Activated CD4-positive, alpha-beta T cell treated with anti-CD3 and anti-CD28 coated beads, Interleukin-2, amount 10 ng/mL, durations not matched to agents 24 days and 14 days (primary cell): ENCODE measurements at regions of chr2 and their contacts with region 1.

Region 1: DNA sequence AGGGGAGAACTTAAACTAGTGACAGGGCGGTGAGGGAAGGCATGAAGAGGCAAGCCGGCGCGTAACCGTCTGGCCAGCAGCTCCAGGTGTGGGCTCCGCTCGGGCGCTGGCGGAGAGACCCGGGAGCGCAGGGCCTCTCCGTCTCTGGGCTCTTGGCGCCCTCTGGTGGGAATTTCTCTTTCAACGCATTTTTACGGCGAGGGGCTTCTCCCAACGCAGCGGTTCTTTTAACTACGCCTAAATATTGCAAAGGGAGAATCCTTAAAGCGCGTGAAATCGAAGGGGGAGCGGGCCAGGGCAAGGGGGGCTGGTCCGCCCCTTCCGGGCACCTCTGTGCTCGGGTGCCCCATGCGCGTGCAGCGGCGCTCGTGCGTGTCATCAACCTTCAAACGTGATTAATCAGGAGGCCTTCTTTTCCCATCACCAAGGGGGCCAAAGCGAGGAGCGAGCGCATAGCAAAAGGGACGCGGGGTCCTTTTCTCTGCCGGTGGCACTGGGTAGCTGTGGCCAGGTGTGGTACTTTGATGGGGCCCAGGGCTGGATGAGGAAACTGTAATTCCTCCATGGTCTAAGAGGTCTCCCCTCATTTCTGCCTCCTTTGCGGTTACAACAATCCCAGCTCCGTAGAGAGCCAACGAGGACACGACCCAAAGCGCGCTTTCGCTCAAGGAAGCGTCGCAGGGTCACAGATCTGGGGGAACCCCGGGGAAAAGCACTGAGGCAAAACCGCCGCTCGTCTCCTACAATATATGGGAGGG is 762 bp upstream of the GAD1 start:
- DNase-seq: peak; percentile 91
- H3K4me3 Mint-ChIP-seq: peak overlapping the region; percentile 83
- H3K27ac Mint-ChIP-seq: peak overlapping the region; percentile 78
- H3K4me1 Mint-ChIP-seq: peaks cover 34% of the 10 kb centered on the region
- H3K27me3 Mint-ChIP-seq: peaks cover 69% of the 10 kb centered on the region

Region 2: DNA sequence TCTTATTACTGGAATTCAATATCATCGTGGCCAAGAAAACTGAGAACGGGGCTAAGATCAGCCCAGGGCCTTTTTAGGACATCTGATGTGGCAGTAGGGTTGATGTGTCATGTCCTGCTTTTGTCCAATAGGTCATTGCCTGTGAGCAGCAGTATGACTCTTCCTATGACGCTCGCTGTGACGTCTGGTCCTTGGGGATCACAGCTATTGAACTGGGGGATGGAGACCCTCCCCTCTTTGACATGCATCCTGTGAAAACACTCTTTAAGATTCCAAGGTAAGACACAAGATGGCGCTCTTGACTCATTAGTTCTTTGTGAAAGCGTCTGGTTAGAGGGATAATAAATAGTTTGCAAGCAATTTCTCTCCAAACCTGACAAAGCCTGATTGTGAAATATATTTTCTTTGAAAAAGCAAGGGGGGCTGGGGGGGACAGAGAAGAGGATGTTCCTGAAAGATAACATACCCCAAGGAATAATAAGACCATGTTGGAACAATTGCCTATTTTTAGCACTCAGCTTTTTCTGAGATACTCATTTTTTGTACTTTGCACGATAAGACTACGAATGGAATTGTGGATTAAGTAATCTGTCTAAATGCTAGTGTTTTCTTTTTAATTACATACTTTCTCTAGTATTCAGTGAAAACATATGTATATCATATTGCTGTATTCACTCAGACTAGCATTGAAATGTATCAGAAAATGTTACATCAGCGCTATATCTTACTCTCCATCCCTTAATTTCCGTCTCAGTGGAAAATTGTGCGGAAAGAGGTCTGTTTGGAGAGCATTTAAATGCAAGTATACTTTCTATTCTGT is 579.9 kb before region 1 on chr2:
- intact Hi-C with region 1: loop called (anchors 1 kb)
- DNase-seq: peak; percentile 76
- H3K4me3 Mint-ChIP-seq: no peak overlapping the region
- H3K27ac Mint-ChIP-seq: no peak overlapping the region
- H3K4me1 Mint-ChIP-seq: no peaks in the 10 kb centered on the region
- H3K27me3 Mint-ChIP-seq: peaks cover 28% of the 10 kb centered on the region

Region 3: GRCh38 chr2:170361090-170361936 is 454.6 kb before region 1 on chr2:
- intact Hi-C with region 1: loop called (anchors 1 kb)
- DNase-seq: peak; percentile 87
- H3K4me3 Mint-ChIP-seq: peak overlapping the region; percentile 40
- H3K27ac Mint-ChIP-seq: peak overlapping the region; percentile 97
- H3K4me1 Mint-ChIP-seq: peaks cover 38% of the 10 kb centered on the region
- H3K27me3 Mint-ChIP-seq: peaks cover 4% of the 10 kb centered on the region

Region 4: GRCh38 chr2:170396799-170397459 is 419.0 kb before region 1 on chr2:
- intact Hi-C with region 1: loop called (anchors 1 kb)
- DNase-seq: no peak
- H3K4me3 Mint-ChIP-seq: no peak overlapping the region
- H3K27ac Mint-ChIP-seq: no peak overlapping the region
- H3K4me1 Mint-ChIP-seq: peaks cover 3% of the 10 kb centered on the region
- H3K27me3 Mint-ChIP-seq: peaks cover 35% of the 10 kb centered on the region

Region 5: GRCh38 chr2:170563401-170563800 is 252.5 kb before region 1 on chr2:
- intact Hi-C with region 1: no loop called
- DNase-seq: no peak
- H3K4me3 Mint-ChIP-seq: no peak overlapping the region
- H3K27ac Mint-ChIP-seq: no peak overlapping the region
- H3K4me1 Mint-ChIP-seq: no peaks in the 10 kb centered on the region
- H3K27me3 Mint-ChIP-seq: peaks cover 22% of the 10 kb centered on the region

Region 6: DNA sequence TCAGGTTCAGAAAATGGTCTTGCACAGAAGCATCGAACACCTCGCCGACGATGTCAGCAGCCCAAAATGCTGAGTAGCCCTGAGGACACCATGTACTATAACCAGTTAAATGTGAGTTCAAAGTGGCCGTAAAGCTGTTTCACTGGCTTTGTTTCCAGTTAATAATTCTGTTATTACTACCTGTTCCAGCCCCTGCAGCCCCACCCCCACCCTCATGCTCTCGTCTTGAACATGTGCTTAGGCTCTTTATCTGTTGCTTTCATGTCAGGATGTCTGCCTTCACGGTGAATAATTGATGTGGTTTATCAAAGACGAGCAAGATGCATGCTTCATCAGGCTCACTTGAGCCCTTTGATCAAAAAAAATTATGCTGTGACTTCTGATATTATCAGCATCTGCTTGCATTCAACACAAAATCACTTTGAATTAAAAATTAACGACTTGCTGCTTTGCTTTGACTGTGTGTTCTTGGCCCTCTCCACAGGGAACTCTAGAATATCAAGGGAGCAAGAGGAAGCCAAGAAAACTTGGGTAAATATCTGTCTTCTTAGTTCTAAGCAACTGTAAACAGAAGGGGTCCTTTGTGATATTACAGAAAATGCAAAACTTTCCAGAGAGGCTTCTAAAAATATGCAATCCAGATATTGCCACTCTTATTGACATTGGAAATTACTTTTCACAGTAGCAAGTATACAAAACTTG is 164.2 kb before region 1 on chr2:
- intact Hi-C with region 1: no loop called
- DNase-seq: peak; percentile 69
- H3K4me3 Mint-ChIP-seq: no peak overlapping the region
- H3K27ac Mint-ChIP-seq: no peak overlapping the region
- H3K4me1 Mint-ChIP-seq: peaks cover 12% of the 10 kb centered on the region
- H3K27me3 Mint-ChIP-seq: peaks cover 16% of the 10 kb centered on the region

Region 7: DNA sequence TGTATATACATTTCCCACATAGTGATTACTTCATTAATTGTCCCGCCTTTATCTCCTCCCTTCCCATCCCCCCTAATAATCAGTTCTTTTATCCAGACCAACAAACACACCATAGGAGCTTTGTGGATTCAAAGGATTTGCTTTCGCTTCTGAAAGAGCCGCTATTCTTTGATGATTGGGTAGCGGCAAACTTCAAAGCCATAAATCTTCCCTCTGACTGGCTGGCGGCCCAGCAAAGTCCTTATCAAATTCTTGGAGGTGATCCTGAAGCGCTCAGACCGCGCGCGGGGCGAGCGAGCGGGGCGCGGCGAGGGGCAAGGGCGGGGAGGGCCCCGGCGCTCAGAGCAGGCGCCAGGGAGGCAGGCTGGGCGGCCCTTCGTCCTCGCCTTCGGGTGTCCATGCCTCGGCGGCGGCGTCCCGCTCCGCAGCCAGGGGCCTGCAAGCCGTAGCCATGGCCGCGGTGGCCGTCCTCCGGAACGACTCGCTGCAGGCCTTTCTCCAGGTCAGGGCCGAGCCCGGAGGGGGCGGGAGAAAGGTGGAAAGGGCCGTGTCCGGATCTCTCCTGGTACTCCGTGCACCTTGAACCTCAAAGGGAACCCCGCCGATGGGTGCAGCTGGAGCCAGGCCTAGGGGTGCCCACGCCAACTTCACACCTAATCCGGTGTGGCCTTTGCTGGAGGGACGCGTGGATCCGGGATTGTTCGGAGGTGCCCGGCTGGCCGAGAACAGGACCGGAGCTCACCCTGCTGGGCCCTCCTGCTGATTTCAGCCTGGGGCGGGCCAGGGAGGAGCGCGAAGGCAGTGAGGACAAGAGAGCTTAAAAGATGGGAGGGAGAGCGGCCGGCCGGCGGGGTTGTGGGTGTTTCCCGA is 100.6 kb before region 1 on chr2 and contains the start of gene SP5:
- intact Hi-C with region 1: loop called (anchors 1 kb)
- DNase-seq: peak; percentile 83
- H3K4me3 Mint-ChIP-seq: peak within 1 kb of the TSS; percentile 86
- H3K27ac Mint-ChIP-seq: peak within 1 kb of the TSS; percentile 75
- H3K4me1 Mint-ChIP-seq: peaks cover 20% of the 10 kb centered on the region
- H3K27me3 Mint-ChIP-seq: peaks cover 71% of the 10 kb centered on the region
- total RNA-seq, gene SP5: 0.09 TPM in 1 of 2 replicates, not detected in the other

Region 8: GRCh38 chr2:170829036-170829435 is 13.1 kb after region 1 on chr2:
- intact Hi-C with region 1: no loop called
- DNase-seq: no peak
- H3K4me3 Mint-ChIP-seq: no peak overlapping the region
- H3K27ac Mint-ChIP-seq: no peak overlapping the region
- H3K4me1 Mint-ChIP-seq: peaks cover 3% of the 10 kb centered on the region
- H3K27me3 Mint-ChIP-seq: peaks cover 43% of the 10 kb centered on the region

Region 9: GRCh38 chr2:170862286-170862902 is 46.5 kb after region 1 on chr2:
- intact Hi-C with region 1: no loop called
- DNase-seq: no peak
- H3K4me3 Mint-ChIP-seq: no peak overlapping the region
- H3K27ac Mint-ChIP-seq: no peak overlapping the region
- H3K4me1 Mint-ChIP-seq: no peaks in the 10 kb centered on the region
- H3K27me3 Mint-ChIP-seq: peaks cover 11% of the 10 kb centered on the region

Region 10: DNA sequence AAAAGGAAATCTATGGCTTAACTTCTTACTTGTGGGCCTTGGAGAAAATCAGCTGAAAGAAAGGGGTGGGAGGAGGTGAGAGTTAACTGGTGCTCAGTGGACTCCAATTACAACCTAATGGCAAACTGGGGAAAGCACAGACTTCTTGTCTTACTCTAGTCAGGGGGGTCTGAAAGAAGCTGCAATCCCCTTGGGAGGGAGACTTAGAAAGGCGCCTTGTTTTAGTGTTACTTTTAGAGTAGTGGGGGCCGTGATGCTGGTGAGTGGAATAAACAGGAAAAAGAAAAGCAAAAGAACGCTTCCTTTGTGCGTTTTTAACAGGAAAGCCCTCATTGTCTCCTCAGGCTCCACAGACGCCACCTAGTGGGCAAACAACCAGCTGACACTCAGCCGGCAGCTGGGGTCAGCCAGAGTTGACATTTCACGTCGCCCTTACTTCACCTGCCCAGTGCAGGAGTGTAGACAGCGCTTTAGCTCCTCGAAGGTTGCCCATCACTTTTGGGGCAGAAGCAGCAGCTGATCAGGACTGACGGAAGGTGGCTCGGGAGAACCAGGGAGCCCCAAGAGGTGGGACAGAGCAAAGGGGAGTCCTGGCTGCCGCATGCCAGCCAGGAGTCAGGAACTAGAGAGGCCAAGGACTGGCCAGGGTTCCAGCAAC is 57.2 kb after region 1 on chr2:
- intact Hi-C with region 1: loop called (anchors 1 kb)
- DNase-seq: peak; percentile 94
- H3K4me3 Mint-ChIP-seq: peak overlapping the region; percentile 81
- H3K27ac Mint-ChIP-seq: peak overlapping the region; percentile 85
- H3K4me1 Mint-ChIP-seq: peaks cover 19% of the 10 kb centered on the region
- H3K27me3 Mint-ChIP-seq: peaks cover 11% of the 10 kb centered on the region